Activated naive CD4-positive, alpha-beta T cell treated with anti-CD3 and anti-CD28 coated beads, Interleukin-2, amount 10 ng/mL, durations not matched to agents 7 days and 5 days (primary cell): ENCODE measurements at regions of chr6 and their contacts with region 1.

Region 1: GRCh38 chr6:41424370-41425058 is 89.1 kb downstream of the NCR2 start:
- DNase-seq: peak; percentile 88
- H3K4me3 Mint-ChIP-seq: no peak overlapping the region
- H3K27ac Mint-ChIP-seq: no peak overlapping the region
- H3K4me1 Mint-ChIP-seq: peaks cover 9% of the 10 kb centered on the region
- H3K27me3 Mint-ChIP-seq: peaks cover 43% of the 10 kb centered on the region

Region 2: DNA sequence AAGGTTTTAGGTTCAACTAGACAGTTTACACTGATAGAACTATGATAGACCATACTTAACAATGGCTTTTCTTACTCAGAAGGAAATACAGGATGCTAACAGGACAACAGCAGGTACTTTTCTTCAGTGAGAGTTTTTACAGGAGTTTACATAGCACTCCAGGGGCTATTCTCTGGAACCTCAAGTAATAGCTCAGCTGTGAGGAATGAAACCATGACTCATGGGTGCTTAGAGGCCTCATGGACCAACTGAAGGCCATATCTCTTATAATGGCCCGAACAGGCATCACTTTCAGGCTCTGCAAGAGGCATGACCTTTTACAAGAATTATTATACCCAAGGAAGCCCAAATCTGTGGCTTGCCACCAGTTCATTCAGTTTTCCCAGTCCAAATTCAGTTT is 302.1 kb before region 1 on chr6:
- CTCF ChIA-PET with region 1: no interaction called
- DNase-seq: no peak
- H3K4me3 Mint-ChIP-seq: no peak overlapping the region
- H3K27ac Mint-ChIP-seq: no peak overlapping the region
- H3K4me1 Mint-ChIP-seq: no peaks in the 10 kb centered on the region
- H3K27me3 Mint-ChIP-seq: no peaks in the 10 kb centered on the region

Region 3: DNA sequence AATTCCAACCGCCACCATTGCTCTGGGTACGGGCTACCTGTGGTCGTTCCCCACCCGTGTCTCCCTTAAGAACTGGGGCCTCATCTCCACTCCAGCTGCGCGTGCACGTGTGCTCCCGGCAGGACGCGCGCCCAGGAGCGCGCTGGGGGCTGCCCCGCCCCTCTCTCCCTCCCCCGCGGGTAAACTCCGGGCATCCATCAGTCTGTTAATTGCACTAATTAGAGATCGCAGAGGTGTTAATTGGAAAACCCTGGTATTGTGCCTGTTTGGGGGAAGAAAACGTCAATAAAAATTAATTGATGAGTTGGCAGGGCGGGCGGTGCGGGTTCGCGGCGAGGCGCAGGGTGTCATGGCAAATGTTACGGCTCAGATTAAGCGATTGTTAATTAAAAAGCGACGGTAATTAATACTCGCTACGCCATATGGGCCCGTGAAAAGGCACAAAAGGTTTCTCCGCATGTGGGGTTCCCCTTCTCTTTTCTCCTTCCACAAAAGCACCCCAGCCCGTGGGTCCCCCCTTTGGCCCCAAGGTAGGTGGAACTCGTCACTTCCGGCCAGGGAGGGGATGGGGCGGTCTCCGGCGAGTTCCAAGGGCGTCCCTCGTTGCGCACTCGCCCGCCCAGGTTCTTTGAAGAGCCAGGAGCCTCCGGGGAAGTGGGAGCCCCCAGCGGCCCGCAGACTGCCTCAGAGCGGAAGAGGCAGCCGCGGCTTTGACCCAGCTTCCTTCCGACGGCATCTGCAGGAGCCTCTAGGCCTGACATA is 136.1 kb after region 1 on chr6:
- CTCF ChIA-PET with region 1: interaction called, 13 read pairs
- DNase-seq: peak; percentile 92
- H3K4me3 Mint-ChIP-seq: peak overlapping the region; percentile 74
- H3K27ac Mint-ChIP-seq: no peak overlapping the region
- H3K4me1 Mint-ChIP-seq: peaks cover 27% of the 10 kb centered on the region
- H3K27me3 Mint-ChIP-seq: peaks cover 91% of the 10 kb centered on the region

Region 4: GRCh38 chr6:41591859-41592502 is 167.5 kb after region 1 on chr6:
- CTCF ChIA-PET with region 1: interaction called, 42 read pairs
- DNase-seq: peak; percentile 85
- H3K4me3 Mint-ChIP-seq: no peak overlapping the region
- H3K27ac Mint-ChIP-seq: no peak overlapping the region
- H3K4me1 Mint-ChIP-seq: no peaks in the 10 kb centered on the region
- H3K27me3 Mint-ChIP-seq: peaks cover 3% of the 10 kb centered on the region